ENCODE measurements at regions of chr1 and their contacts with region 1.

Region 1: DNA sequence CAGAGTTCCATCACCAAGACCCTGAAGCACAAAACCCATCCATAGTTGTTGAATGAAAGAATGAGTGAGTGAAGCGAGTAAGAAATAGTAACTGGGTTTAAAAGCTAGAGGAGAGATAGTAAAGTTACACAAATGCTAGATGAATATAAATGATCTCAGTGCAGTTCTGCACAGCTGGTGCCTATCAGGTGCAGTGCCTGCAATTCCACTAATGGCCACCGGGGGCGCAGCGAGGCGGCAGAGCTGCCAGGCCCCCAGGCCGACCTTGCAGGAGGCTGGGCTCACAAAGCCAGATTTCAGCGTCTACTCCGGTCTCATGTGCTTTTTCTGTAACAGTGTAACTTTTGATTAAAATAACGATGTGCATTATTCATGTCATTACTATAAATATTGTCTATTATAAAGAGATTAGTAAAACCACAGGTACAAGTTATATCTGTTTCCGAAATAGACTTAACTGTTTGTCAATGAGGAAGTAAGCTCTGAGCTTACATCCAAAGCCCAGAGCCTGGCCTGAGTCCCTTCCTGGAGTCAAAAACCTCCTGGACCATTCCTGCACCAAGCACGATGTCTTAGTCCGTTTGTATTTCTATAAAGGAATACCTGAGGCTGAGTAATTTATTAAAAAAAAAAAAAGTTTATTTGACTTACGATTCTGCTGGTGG is 477.6 kb downstream of the NPHP4 start:
- DNase-seq: peak; percentile 47
- H3K4me3 Mint-ChIP-seq: no peak overlapping the region
- H3K27ac Mint-ChIP-seq: no peak overlapping the region
- H3K4me1 Mint-ChIP-seq: no peaks in the 10 kb centered on the region
- H3K27me3 Mint-ChIP-seq: no peaks in the 10 kb centered on the region

Region 2: DNA sequence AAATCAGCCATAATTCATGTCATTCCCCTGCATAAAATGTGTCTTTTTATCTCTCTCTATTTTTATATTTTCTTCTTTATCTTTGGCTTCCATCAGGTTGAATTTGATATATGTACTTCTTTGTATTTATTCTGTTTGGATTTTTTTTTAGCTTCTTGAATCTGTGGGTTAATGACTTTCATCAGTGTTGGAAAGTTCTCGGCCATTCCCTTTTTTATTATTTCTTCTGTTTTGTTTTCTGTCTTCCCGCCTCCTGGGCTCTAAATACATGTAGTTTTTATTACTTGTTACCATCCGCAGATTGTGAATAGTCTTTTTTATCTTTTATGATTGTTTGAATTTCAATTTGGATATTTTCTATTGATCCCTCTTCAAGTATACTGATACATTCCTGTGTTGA is 160.0 kb before region 1 on chr1:
- intact Hi-C with region 1: no loop called
- DNase-seq: no peak
- H3K4me3 Mint-ChIP-seq: no peak overlapping the region
- H3K27ac Mint-ChIP-seq: no peak overlapping the region
- H3K4me1 Mint-ChIP-seq: no peaks in the 10 kb centered on the region
- H3K27me3 Mint-ChIP-seq: no peaks in the 10 kb centered on the region

Region 3: DNA sequence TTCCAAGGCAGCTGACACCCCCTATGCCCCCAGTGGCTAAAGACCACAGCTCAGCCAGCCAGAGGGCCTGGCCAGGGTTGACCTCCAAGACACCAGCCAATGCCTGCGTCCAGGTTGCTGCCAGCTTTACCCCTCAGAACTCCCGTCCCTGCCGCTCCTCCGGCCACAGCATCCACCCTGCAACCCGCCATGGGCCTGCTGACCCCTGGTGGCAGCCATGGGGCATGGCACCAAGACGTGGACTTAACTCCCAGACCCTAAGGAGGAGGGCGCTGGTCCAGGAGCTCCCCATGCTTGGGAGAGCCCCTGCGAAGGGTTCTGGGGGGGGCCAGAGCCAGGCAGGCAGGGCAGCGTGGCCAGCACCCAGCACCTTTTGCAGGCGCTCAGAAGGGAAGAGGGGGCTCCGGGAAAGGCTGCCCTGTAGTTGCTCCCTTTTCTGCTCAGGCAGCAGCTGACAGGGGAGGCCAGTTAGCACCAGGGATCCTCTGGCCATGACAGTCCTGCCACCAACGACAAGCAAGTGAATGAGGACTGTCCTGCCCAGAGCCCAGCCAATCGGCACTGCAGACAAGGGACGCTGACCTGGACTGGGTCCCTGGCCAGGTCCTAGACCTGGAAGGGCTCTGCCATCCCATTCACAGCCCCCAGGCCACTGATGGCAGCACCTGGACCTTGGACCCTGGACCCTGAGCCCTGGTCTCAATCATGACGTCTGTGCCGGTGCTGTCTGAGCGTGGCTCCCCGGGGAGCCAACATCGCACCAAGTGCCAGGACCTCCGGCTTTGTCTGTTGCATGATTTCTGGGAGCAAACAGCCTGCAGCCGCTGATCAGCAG is 231.3 kb after region 1 on chr1:
- intact Hi-C with region 1: loop called (anchors 5 kb)
- DNase-seq: peak; percentile 28
- H3K4me3 Mint-ChIP-seq: no peak overlapping the region
- H3K27ac Mint-ChIP-seq: no peak overlapping the region
- H3K4me1 Mint-ChIP-seq: no peaks in the 10 kb centered on the region
- H3K27me3 Mint-ChIP-seq: peaks cover 3% of the 10 kb centered on the region